Gastrocnemius medialis (tissue), 4 donors: ENCODE measurements at regions of chr9 and their contacts with region 1.

Region 1: DNA sequence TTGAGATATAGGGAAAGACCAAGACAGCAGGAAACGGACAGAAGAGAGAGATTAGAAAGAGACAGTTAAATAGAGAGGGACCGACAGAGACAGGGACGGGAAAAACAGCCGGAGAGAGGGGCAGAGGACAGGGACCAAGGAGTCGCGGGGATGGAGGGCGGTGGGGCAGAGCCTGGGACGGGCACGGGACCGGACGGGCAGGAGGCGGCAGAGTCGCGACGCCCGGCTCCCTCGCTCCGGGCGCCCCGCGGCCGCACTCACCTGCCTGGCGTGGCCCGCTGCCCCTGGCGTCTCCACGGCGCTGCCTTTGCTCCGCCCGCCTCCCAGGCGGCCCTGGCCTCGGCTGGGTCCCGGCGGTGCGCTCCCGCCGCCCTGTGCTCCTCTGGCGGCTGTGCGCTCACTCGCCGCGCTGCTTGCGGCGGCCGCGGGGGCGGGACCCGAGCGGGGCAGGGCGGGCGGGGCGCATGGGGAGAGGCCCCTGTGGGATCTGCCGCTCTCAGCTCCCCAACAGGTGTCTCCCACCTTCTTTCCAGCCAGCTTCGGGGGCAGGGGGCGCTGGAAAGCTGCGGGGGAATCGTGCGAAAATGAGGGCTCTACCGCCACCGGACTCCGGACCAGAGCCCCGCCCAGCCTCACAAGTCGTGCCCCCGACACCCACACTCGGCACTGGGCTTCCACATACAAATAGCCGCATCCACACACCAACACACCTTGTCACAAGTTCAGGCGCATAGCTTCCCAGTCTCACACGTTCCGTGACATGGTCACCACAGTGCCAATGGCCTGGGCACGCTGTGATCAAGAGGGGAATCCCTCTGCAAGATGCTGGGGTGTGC is at the start of gene ARID3C:
- DNase-seq: no peak
- ATAC-seq: peak; percentile 34 to 48
- H3K4me3 ChIP-seq: peak within 1 kb of the TSS; percentile 37 to 58 (median 48)
- H3K27ac ChIP-seq: no peak within 1 kb of the TSS
- H3K4me1 ChIP-seq: peaks cover 0 to 13% of the 10 kb centered on the region in 2 donors
- H3K27me3 ChIP-seq: peaks cover 49 to 57% (median 57%) of the 10 kb centered on the region in 3 donors
- CTCF ChIP-seq: no peak
- POLR2A ChIP-seq: no peak
- total RNA-seq, gene ARID3C: not detected

Region 2: DNA sequence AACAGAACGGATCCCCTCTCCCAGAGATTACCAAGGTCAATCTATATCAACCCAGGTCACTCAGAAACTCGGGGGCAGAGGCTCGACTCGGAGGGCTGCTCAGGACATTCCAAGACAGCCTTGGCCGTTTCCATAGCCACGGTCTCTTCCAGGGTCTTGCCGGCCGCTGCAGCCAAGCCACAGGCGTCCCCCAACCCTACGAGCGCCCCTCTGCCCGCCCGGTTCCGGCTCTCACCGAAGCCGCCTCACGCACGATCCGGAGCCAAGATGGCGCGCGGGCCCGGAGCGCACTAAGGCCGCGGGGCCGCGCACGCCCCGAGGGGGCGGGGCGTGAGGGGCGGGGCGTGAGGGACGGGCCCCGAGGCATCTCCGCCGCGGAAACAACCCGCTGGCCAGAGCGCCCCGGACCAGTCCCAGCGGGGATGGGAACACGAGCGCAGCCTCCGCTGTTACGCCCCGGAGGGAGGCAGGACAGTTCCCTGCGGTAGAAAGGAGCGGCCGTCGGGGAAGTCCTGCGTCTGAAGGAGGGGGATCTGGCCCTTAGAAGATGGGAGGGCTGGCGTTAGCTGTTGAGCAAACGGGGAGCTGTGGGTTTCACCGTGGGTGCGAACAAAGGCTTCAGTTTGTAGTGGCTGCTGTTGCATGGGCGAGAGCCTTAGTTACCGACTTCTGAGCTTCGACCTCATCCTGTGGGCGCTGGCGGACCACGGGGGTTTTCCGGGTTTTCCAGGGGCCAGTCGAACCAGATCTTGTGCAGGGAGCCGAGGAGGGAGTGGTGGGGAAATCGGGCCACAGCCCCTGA is 16.8 kb before region 1 on chr9 and contains the start of gene RPP25L:
- in situ Hi-C with region 1: no loop called
- intact Hi-C with region 1: loop called (anchors 1 kb)
- DNase-seq: peak; percentile 75 to 76
- ATAC-seq: peak; percentile 79 to 83
- H3K4me3 ChIP-seq: peak within 1 kb of the TSS; percentile 67 to 89 (median 81)
- H3K27ac ChIP-seq: peak within 1 kb of the TSS; percentile 93 to 98 (median 96)
- H3K4me1 ChIP-seq: peaks cover 23 to 30% of the 10 kb centered on the region in 2 donors
- H3K27me3 ChIP-seq: no peaks in the 10 kb centered on the region
- CTCF ChIP-seq: peak in 1 of 5 experiments; percentile 9
- POLR2A ChIP-seq: peak; percentile 82 to 90
- total RNA-seq, gene RPP25L: 53.7 to 138 (median 97.2) TPM